ENCODE measurements at regions of chr6 and their contacts with region 1.

Region 1: DNA sequence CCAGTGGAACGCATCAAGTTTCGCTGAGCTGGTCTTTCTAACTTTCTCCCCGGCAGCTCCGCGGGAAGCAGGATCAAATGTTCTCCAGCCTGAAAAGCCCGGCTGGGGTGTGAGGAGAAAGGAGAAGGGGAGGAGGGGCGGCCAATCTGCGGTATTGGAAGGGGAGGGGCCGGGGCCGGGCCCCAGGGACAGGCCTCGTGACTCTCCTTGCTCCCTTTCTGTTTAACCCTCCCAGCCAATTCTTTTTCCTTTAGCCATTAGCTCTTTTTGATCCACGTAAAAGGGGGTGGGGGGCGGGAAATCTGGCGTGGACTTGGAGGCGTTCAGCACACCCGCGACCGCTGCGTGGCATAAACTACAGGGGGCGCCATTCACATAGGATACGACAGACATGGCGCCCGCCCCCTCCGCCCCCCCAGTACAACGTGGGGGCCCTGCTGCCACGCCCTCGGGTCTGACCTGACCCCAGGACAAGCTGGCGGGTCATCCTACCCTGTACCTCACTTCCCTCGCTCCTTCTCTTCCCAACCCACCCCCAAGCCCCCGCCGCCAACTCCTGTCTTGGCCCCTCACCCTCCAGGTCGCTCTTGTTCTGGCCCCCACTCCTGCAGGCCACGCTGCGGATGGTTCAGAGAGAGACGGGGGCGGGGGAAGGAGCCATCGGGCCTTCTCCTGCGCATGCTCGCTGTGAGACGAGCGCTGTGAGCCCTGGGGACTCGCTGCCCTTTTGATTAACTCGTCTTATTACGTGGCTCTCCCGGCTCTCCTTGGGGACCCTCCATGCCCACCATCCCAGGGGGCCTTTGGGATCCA is 7.8 kb upstream of the MDGA1 start:
- DNase-seq: peak; percentile 70 to 96 (median 78)

Region 2: DNA sequence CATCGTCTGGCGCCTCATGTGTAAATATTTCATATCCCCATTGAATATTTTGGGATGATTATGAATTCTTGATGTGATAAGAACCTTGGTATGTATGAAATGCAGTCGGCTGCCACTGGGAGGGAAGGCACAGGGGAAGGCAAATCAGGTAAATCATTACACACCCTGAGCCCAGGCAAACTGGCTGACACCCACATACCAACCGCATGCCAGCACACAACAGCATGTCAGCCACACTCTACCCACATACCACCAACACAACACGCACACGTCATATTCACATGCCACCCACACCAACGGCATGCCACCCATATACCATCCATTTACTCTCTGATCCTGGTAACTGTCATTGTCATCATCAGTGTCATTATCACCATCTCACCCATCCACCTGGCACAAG is 20.5 kb after region 1 on chr6:
- intact Hi-C with region 1: no loop called
- DNase-seq: no peak

Region 3: GRCh38 chr6:37783856-37784584 is 78.6 kb after region 1 on chr6:
- intact Hi-C with region 1: loop called (anchors 5 kb)
- DNase-seq: peak in 7 of 10 donors; percentile 19 to 85 (median 33)

Region 4: DNA sequence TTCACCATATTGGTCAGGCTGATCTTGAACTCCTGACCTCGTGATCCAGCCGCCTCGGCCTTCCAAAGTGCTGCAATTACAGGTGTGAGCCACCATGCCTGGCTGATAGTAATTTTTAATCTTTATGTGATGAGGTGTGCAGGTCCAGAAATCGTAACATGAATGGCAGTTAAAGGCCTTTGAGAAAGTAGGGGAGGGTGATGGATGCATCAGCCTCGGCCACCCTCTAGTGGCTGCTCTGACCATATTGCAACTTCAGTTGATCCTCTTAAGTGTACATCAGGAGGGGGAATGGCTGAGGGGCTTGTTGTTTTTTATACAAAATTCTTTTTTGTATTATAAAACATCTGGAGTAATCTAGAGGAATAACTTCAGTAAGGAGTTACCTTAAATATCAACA is 307.1 kb after region 1 on chr6:
- intact Hi-C with region 1: loop called (anchors 10 kb)
- DNase-seq: peak in 7 of 10 donors; percentile 8 to 82 (median 35)

Region 5: GRCh38 chr6:38671885-38672467 is 966.5 kb after region 1 on chr6:
- intact Hi-C with region 1: loop called (anchors 10 kb)
- DNase-seq: no peak

Measured in posterior cingulate gyrus (tissue), 11 donors.